ENCODE measurements at regions of chr9 and their contacts with region 1.

Region 1: GRCh38 chr9:131709771-131710454 is 30.0 kb downstream of the RAPGEF1 start:
- DNase-seq: no peak
- ATAC-seq: peak in 4 of 8 donors; percentile 2 to 35 (median 20)
- H3K4me3 ChIP-seq: peak overlapping the region in 9 of 10 donors; percentile 18 to 54 (median 49)
- H3K27ac ChIP-seq: peak overlapping the region; percentile 56 to 91 (median 84)
- H3K4me1 ChIP-seq: peaks cover 13 to 98% (median 78%) of the 10 kb centered on the region in 9 donors
- H3K27me3 ChIP-seq: no peaks in the 10 kb centered on the region
- CTCF ChIP-seq: peak in 1 of 9 donors; percentile 7

Region 2: GRCh38 chr9:131618071-131618479 is 91.8 kb before region 1 on chr9:
- intact Hi-C with region 1: loop called in 1 of 10 experiments (anchors 2 kb)
- DNase-seq: peak; percentile 64 to 94
- ATAC-seq: peak; percentile 85 to 96 (median 92)
- H3K4me3 ChIP-seq: no peak overlapping the region
- H3K27ac ChIP-seq: peak overlapping the region in 8 of 10 donors; percentile 29 to 69 (median 62)
- H3K4me1 ChIP-seq: peaks cover 8 to 46% (median 33%) of the 10 kb centered on the region in 9 donors
- H3K27me3 ChIP-seq: no peaks in the 10 kb centered on the region
- CTCF ChIP-seq: no peak

Region 3: DNA sequence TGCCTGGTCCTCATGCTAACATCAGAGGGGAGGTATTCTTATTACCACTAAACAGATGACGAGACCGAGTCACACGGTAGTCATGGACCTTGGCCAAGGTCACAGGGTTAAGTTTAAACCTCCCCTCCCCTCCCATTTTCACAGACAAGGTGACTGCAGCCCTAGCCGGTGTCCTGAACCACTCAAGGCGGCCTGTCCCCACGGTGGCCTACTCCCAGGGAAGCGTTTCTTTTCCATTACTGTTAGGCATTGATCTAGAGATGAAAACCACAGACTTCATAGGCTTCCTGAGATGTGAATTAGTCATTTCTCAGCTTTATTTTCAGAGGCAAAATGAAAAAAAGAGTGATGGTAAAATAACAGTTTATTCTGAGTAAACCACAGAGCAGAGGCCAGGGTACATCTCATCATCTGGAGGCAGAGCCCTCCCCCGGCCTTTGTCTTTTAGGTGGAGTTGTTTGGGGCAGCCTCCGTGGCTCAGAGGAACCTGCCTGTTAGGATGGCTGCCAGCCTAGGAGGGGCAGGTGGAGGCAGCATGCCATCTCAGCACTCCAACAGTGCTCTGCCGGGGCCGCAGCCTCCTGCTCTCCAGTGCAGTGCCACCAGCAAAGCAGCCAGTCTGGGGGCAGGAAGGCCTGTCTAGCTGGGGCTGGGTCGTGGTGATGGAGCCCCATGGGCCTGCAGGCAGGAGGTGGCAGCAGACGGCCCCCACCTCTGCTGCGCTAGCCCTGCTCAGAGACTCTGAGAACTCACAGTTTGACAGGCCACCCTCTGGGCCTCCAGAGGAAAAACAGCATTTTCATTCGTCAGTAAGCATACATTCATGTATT is 41.3 kb before region 1 on chr9:
- intact Hi-C with region 1: loop called in 1 of 10 experiments (anchors 5 kb)
- DNase-seq: no peak
- ATAC-seq: peak in 6 of 8 donors; percentile 23 to 35 (median 28)
- H3K4me3 ChIP-seq: peak overlapping the region in 1 of 10 donors; percentile 9
- H3K27ac ChIP-seq: peak overlapping the region; percentile 64 to 91 (median 83)
- H3K4me1 ChIP-seq: peaks cover 45 to 88% (median 80%) of the 10 kb centered on the region in 9 donors
- H3K27me3 ChIP-seq: no peaks in the 10 kb centered on the region
- CTCF ChIP-seq: no peak

Region 4: DNA sequence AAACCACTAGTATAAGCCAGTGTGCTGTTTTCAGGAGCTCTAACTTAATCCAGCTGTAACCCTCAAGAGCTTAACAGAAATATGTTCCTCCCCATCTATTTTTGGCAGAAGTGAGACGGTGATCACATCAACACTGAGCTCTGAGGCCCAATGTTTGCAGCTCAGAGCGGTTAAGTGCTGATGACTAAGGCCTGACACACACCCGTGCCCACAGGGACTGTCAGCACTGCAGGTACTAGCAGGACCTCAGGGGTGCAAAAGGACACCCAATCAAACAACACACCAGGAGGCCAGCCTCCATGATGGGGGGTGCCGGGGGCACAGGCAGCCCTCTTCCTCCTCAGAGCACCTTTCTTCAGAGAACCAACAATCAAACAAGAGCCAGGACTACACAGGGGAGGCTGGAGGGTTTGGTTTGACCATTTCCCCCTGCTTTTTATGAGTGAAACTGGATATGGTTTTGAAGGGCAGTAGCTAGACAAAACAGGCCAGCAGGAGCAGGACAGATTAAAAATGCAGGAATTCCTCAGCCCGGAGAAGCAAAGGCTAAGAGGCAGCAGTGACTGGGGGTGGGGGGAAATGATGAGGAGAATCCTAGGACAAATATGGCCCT is 31.3 kb before region 1 on chr9:
- intact Hi-C with region 1: loop called in 3 of 10 experiments (anchors 5 kb)
- DNase-seq: peak; percentile 66 to 69
- ATAC-seq: peak; percentile 76 to 98 (median 87)
- H3K4me3 ChIP-seq: peak overlapping the region in 1 of 10 donors; percentile 1
- H3K27ac ChIP-seq: peak overlapping the region; percentile 70 to 91 (median 82)
- H3K4me1 ChIP-seq: peaks cover 37 to 100% (median 92%) of the 10 kb centered on the region in 9 donors
- H3K27me3 ChIP-seq: no peaks in the 10 kb centered on the region
- CTCF ChIP-seq: no peak

Region 5: DNA sequence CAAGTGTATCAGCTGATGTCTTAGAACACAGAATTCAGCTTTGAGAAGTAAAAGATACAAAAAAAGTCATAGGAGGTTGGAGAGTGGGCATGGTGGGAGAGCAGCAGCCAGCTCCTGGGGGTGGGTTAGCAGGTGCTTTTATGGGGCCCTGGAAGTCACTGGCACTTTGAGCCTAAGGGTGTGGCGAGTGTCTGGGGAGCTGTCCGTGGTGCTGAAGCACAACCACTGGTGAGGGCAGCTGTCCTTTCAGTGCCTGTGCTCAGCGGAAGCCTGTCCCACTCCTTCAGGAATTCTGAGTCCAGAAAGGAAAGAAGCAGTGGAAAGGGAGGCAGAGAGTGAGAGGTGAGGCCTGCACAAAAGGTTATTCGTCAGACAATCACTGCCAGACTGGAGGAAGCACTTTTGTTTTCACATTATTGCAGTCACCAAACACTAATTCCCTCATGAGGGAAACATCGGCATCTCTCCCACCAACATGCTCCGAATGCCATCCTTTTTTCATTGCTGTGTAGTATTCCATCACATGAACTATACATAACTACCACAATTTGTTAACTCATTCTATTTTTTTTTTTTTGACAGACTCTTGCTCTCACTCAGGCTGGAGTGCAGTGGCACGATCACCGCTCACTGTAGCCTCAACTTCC is 89.4 kb after region 1 on chr9:
- intact Hi-C with region 1: no loop called
- DNase-seq: peak; percentile 48 to 54
- ATAC-seq: peak in 5 of 8 donors; percentile 43 to 72 (median 64)
- H3K4me3 ChIP-seq: no peak overlapping the region
- H3K27ac ChIP-seq: no peak overlapping the region
- H3K4me1 ChIP-seq: no peaks in the 10 kb centered on the region
- H3K27me3 ChIP-seq: peaks cover 0 to 29% (median 21%) of the 10 kb centered on the region in 7 donors
- CTCF ChIP-seq: no peak